B cell (primary cell): ENCODE measurements at regions of chr19 and their contacts with region 1.

Region 1: DNA sequence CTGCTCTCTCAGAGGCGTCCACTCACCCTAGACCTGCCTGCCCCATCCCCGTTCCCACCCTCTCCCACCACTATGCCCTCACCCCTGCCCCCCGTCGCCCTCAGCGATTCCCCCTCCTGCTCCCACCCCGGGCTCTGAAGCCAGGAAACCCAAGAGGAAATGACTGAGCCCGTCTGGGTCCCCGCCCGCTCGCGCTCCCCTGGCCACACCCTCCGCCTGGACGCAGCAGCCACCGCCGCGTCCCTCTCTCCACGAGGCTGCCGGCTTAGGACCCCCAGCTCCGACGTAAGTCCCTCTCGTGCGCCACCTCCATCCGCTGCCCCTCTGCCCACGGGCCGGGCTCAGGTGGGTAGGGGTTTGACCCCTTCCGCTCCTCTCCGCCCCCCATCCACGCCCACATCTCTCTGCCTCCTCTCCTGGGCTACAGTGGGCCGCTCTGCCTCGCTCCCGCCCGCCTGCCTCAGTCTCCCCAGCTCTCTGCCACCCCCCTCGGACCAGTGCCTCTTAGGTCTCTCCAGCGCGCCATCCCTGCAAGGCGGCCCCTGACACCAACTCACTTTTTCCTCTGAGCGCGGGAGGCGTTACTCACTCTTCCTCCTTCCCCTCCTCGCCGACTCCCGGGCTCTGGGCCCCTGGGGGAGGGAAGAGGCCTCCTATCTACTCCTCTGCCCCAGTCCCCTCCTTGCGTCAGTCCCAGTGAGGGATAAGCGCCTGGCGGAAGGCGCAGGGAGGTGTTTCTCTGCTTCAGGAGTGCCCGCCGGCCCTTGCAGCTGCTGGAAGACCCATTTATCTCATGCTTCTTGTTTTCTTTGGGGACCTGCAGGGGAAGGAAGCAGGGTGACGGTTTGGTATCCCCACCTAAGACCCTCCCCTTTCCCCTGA is at the start of gene FXYD5:
- DNase-seq: peak; percentile 64
- ATAC-seq: peak; percentile 72
- H3K4me3 ChIP-seq: peak within 1 kb of the TSS; percentile 51 to 93 (median 90)
- H3K4me3 Mint-ChIP-seq: peak within 1 kb of the TSS; percentile 100
- H3K27ac ChIP-seq: peak within 1 kb of the TSS; percentile 43 to 85
- H3K27ac Mint-ChIP-seq: peak within 1 kb of the TSS; percentile 97
- H3K4me1 ChIP-seq: peaks cover 20 to 25% of the 10 kb centered on the region in 2 donors
- H3K4me1 Mint-ChIP-seq: peaks cover 49% of the 10 kb centered on the region
- H3K27me3 ChIP-seq: peaks cover 0 to 3% (median 0%) of the 10 kb centered on the region in 4 experiments
- H3K27me3 Mint-ChIP-seq: no peaks in the 10 kb centered on the region
- CTCF ChIP-seq: no peak
- total RNA-seq, gene FXYD5: 293 and 310 TPM in 2 replicates

Region 2: DNA sequence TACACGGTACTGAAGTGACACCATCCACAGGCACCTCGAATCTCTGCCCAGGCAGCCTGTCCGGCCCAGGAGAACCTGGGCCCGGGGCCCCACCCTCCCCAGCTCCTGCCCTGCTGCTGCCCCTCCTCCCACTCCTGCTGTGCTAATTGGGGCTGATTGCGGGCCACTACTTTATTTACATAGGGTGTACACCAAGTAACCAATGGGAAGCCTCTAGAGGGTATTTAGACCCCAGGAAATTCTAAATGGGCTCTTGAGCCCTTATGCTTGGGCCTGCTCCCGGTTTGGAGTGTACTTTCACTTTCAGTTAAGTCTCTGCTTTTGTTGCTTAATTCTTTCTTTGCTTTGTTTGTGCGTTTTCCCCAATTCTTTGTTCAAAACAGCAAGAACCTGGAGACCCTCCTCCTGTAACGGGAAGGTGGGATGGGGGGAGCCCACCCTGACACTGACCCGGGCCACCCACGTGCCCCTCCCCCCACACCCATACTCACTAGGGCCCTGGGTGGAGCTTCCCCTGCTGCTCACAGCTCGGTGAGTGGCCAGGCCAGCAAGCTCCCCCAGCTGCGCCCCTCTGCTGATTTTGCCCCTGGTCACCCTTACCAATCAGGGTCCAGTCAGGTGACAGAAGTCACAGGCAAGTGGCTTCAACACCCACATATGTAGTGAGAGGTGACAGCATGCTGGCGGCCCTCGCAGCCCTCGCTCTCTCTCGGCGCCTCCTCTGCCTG is 487.3 kb before region 1 on chr19:
- CTCF ChIA-PET with region 1: no interaction called
- POLR2A ChIA-PET with region 1: no interaction called
- intact Hi-C with region 1: no loop called
- DNase-seq: no peak
- ATAC-seq: no peak
- H3K4me3 ChIP-seq: no peak overlapping the region
- H3K4me3 Mint-ChIP-seq: no peak overlapping the region
- H3K27ac ChIP-seq: no peak overlapping the region
- H3K27ac Mint-ChIP-seq: no peak overlapping the region
- H3K4me1 ChIP-seq: peaks cover 0 to 5% of the 10 kb centered on the region in 2 donors
- H3K4me1 Mint-ChIP-seq: peaks cover 9% of the 10 kb centered on the region
- H3K27me3 ChIP-seq: no peaks in the 10 kb centered on the region
- H3K27me3 Mint-ChIP-seq: no peaks in the 10 kb centered on the region
- CTCF ChIP-seq: no peak

Region 3: GRCh38 chr19:35059006-35059798 is 95.6 kb before region 1 on chr19:
- CTCF ChIA-PET with region 1: no interaction called
- POLR2A ChIA-PET with region 1: no interaction called
- intact Hi-C with region 1: no loop called
- DNase-seq: no peak
- ATAC-seq: no peak
- H3K4me3 ChIP-seq: no peak overlapping the region
- H3K4me3 Mint-ChIP-seq: no peak overlapping the region
- H3K27ac ChIP-seq: no peak overlapping the region
- H3K27ac Mint-ChIP-seq: no peak overlapping the region
- H3K4me1 ChIP-seq: no peaks in the 10 kb centered on the region
- H3K4me1 Mint-ChIP-seq: no peaks in the 10 kb centered on the region
- H3K27me3 ChIP-seq: no peaks in the 10 kb centered on the region
- H3K27me3 Mint-ChIP-seq: peaks cover 9% of the 10 kb centered on the region
- CTCF ChIP-seq: no peak

Region 4: DNA sequence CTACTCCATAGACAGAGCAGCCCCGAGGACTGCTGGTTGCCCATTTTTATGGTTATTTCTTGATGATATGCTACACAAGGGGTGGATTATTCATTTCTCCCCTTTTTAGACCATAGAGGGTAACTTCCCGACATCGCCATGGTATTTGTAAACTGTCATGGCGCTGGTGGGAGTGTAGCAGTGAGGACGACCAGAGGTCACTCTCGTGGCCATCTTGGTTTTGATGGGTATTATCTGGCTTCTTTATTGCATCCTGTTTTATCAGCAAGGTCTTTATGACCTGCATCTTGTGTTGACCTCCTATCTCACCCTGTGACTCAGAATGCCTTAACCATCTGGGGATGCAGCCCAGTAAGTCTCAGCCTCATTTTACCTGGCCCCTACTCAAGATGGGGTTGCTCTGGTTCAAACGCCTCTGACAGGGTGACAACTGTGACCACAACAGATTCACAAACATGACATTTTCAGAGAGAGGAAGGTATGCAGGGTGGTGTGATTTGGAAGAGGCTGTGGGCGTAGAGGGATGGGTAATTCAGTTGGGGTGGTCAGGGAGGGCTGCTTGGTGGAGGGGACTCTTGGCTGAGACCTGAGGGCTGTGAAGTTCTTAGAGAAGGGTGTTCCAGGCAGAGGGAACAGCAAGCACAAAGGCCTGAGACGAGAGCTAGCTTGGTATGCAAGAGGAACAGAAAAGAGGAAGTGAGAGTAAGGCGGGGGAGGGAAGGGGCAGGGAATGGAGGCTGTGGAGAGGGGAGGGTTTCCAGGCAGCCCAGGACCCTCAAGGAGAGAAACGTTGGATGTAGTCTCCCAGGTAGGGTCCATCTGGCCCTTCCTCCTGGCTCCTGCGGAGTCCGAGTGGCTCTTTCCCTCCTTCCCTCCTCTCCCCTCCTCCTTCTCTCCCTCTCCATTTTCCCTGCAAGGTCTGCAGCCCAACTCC is 50.3 kb after region 1 on chr19:
- CTCF ChIA-PET with region 1: interaction called, 4 read pairs
- POLR2A ChIA-PET with region 1: interaction called, 18 read pairs
- intact Hi-C with region 1: loop called (anchors 2 kb)
- DNase-seq: peak; percentile 91
- ATAC-seq: peak; percentile 74
- H3K4me3 ChIP-seq: peak overlapping the region in 3 of 5 experiments; percentile 7 to 45 (median 13)
- H3K4me3 Mint-ChIP-seq: peak overlapping the region; percentile 78
- H3K27ac ChIP-seq: peak overlapping the region; percentile 93 to 95
- H3K27ac Mint-ChIP-seq: peak overlapping the region; percentile 96
- H3K4me1 ChIP-seq: peaks cover 65 to 68% of the 10 kb centered on the region in 2 donors
- H3K4me1 Mint-ChIP-seq: peaks cover 59% of the 10 kb centered on the region
- H3K27me3 ChIP-seq: no peaks in the 10 kb centered on the region
- H3K27me3 Mint-ChIP-seq: no peaks in the 10 kb centered on the region
- CTCF ChIP-seq: no peak

Region 5: GRCh38 chr19:35236638-35237400 is 82.1 kb after region 1 on chr19:
- CTCF ChIA-PET with region 1: interaction called, 11 read pairs
- POLR2A ChIA-PET with region 1: interaction called, 9 read pairs
- intact Hi-C with region 1: no loop called
- DNase-seq: peak; percentile 43
- ATAC-seq: no peak
- H3K4me3 ChIP-seq: no peak overlapping the region
- H3K4me3 Mint-ChIP-seq: no peak overlapping the region
- H3K27ac ChIP-seq: no peak overlapping the region
- H3K27ac Mint-ChIP-seq: peak overlapping the region; percentile 8
- H3K4me1 ChIP-seq: peaks cover 13 to 18% of the 10 kb centered on the region in 2 donors
- H3K4me1 Mint-ChIP-seq: peaks cover 19% of the 10 kb centered on the region
- H3K27me3 ChIP-seq: no peaks in the 10 kb centered on the region
- H3K27me3 Mint-ChIP-seq: peaks cover 3% of the 10 kb centered on the region
- CTCF ChIP-seq: no peak

Region 6: DNA sequence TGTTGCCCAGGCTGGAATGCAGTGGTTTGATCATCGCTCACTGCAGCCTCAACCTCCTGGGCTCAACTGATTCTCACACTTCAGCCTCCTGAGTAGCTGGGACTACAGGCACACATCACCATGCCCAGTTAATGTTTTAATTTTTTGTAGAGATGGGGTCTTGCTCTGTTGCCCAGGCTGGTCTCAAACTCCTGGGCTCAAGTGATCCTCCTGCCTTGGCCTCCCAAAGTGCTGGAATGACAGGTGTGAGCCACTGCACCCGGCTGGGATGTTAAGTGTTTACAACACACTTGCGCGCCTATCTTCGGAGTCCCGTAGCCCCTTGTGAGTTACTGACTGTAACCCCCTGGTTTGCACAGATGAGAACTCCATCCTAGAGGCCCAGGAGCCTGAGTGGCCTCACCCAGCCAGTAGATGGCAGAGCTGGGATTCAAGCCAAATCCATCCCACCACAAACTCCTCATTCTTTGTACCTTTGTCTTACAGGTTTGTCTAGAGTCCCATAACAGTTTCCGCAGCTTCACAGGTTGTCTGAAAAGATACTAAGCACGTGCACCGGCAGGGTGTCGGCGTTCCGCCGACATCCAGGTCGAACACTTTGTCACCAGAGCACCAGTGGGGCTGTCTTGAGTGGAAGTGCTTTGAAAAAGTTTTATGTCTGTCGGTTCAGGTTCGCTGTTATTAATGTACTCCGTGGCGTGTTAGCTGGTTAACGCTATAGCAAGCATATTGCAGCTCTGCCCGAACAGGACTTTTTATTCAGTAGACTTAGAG is 151.9 kb after region 1 on chr19:
- CTCF ChIA-PET with region 1: no interaction called
- POLR2A ChIA-PET with region 1: no interaction called
- intact Hi-C with region 1: no loop called
- DNase-seq: peak; percentile 58
- ATAC-seq: peak; percentile 62
- H3K4me3 ChIP-seq: no peak overlapping the region
- H3K4me3 Mint-ChIP-seq: peak overlapping the region; percentile 29
- H3K27ac ChIP-seq: no peak overlapping the region
- H3K27ac Mint-ChIP-seq: peak overlapping the region; percentile 65
- H3K4me1 ChIP-seq: peaks cover 21 to 42% of the 10 kb centered on the region in 2 donors
- H3K4me1 Mint-ChIP-seq: peaks cover 45% of the 10 kb centered on the region
- H3K27me3 ChIP-seq: no peaks in the 10 kb centered on the region
- H3K27me3 Mint-ChIP-seq: no peaks in the 10 kb centered on the region
- CTCF ChIP-seq: peak; percentile 33